CD8-positive, alpha-beta T cell (primary cell): ENCODE measurements at regions of chr1 and their contacts with region 1.

Region 1: GRCh38 chr1:89358287-89358893 is 5.5 kb upstream of the GBP6 start:
- DNase-seq: peak; percentile 70 to 88 (median 84)
- ATAC-seq: peak; percentile 96
- H3K4me3 ChIP-seq: no peak overlapping the region
- H3K4me3 Mint-ChIP-seq: peak overlapping the region; percentile 8
- H3K27ac ChIP-seq: no peak overlapping the region
- H3K27ac Mint-ChIP-seq: peak overlapping the region; percentile 1
- H3K4me1 ChIP-seq: peaks cover 7% of the 10 kb centered on the region
- H3K4me1 Mint-ChIP-seq: peaks cover 35% of the 10 kb centered on the region
- H3K27me3 ChIP-seq: no peaks in the 10 kb centered on the region
- H3K27me3 Mint-ChIP-seq: no peaks in the 10 kb centered on the region
- CTCF ChIP-seq: peak; percentile 95

Region 2: GRCh38 chr1:88983791-88984559 is 374.4 kb before region 1 on chr1:
- CTCF ChIA-PET with region 1: interaction called, 28 read pairs
- POLR2A ChIA-PET with region 1: no interaction called
- intact Hi-C with region 1: no loop called
- DNase-seq: peak in 4 of 9 experiments; percentile 23 to 83 (median 61)
- ATAC-seq: peak; percentile 85
- H3K4me3 ChIP-seq: no peak overlapping the region
- H3K4me3 Mint-ChIP-seq: peak overlapping the region; percentile 47
- H3K27ac ChIP-seq: peak overlapping the region in 1 of 2 experiments; percentile 38
- H3K27ac Mint-ChIP-seq: peak overlapping the region; percentile 52
- H3K4me1 ChIP-seq: peaks cover 15% of the 10 kb centered on the region
- H3K4me1 Mint-ChIP-seq: peaks cover 62% of the 10 kb centered on the region
- H3K27me3 ChIP-seq: no peaks in the 10 kb centered on the region
- H3K27me3 Mint-ChIP-seq: no peaks in the 10 kb centered on the region
- CTCF ChIP-seq: peak; percentile 69

Region 3: GRCh38 chr1:89005286-89006151 is 352.9 kb before region 1 on chr1:
- CTCF ChIA-PET with region 1: interaction called, 72 read pairs
- POLR2A ChIA-PET with region 1: interaction called, 4 read pairs
- intact Hi-C with region 1: no loop called
- DNase-seq: no peak
- ATAC-seq: no peak
- H3K4me3 ChIP-seq: no peak overlapping the region
- H3K4me3 Mint-ChIP-seq: no peak overlapping the region
- H3K27ac ChIP-seq: no peak overlapping the region
- H3K27ac Mint-ChIP-seq: no peak overlapping the region
- H3K4me1 ChIP-seq: peaks cover 24% of the 10 kb centered on the region
- H3K4me1 Mint-ChIP-seq: peaks cover 40% of the 10 kb centered on the region
- H3K27me3 ChIP-seq: no peaks in the 10 kb centered on the region
- H3K27me3 Mint-ChIP-seq: no peaks in the 10 kb centered on the region
- CTCF ChIP-seq: no peak

Region 4: DNA sequence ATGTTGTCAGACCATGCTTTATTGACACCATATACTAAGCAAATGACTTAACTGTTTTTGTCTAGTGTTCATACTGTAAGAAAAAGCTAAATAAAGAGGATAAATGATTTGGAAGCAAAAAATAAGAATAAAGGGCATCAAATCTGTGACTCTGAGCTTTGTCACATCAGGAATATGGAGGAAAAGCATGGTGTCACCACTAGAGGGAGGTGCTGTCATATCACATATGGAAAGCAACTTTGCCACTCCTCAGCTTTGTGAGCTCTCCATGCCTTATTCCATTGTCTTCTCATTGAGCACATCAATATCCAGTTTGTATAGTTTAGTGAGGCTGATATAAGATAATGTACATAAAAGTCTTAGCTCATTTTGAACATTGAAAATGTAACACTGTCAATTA is 272.6 kb before region 1 on chr1:
- CTCF ChIA-PET with region 1: interaction called, 24 read pairs
- POLR2A ChIA-PET with region 1: no interaction called
- intact Hi-C with region 1: loop called (anchors 1 kb)
- DNase-seq: peak in 4 of 9 experiments; percentile 33 to 73 (median 51)
- ATAC-seq: peak; percentile 57
- H3K4me3 ChIP-seq: no peak overlapping the region
- H3K4me3 Mint-ChIP-seq: no peak overlapping the region
- H3K27ac ChIP-seq: no peak overlapping the region
- H3K27ac Mint-ChIP-seq: no peak overlapping the region
- H3K4me1 ChIP-seq: no peaks in the 10 kb centered on the region
- H3K4me1 Mint-ChIP-seq: no peaks in the 10 kb centered on the region
- H3K27me3 ChIP-seq: no peaks in the 10 kb centered on the region
- H3K27me3 Mint-ChIP-seq: no peaks in the 10 kb centered on the region
- CTCF ChIP-seq: peak; percentile 59

Region 5: DNA sequence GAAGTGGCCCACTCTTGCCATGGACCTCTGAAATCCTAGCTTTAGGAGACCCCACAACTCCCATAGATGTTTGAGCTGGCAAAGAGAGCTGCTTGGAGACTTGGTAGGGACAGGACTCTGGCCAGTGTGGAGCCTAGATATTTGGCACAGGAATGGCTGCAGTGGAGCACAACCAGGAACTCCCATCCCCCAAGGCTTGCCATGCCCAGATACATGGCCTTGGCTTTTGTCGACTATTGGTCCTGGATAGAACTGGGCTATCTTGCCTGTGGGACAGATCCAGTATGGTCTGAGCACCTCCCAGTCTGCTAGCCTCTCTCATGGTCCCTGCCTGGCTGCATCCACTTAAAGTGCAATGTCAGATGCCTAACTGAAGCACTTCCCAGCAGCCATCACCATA is 224.6 kb before region 1 on chr1:
- CTCF ChIA-PET with region 1: interaction called, 10 read pairs
- POLR2A ChIA-PET with region 1: no interaction called
- intact Hi-C with region 1: no loop called
- DNase-seq: no peak
- ATAC-seq: no peak
- H3K4me3 ChIP-seq: no peak overlapping the region
- H3K4me3 Mint-ChIP-seq: no peak overlapping the region
- H3K27ac ChIP-seq: no peak overlapping the region
- H3K27ac Mint-ChIP-seq: no peak overlapping the region
- H3K4me1 ChIP-seq: peaks cover 9% of the 10 kb centered on the region
- H3K4me1 Mint-ChIP-seq: peaks cover 17% of the 10 kb centered on the region
- H3K27me3 ChIP-seq: no peaks in the 10 kb centered on the region
- H3K27me3 Mint-ChIP-seq: no peaks in the 10 kb centered on the region
- CTCF ChIP-seq: no peak

Region 6: DNA sequence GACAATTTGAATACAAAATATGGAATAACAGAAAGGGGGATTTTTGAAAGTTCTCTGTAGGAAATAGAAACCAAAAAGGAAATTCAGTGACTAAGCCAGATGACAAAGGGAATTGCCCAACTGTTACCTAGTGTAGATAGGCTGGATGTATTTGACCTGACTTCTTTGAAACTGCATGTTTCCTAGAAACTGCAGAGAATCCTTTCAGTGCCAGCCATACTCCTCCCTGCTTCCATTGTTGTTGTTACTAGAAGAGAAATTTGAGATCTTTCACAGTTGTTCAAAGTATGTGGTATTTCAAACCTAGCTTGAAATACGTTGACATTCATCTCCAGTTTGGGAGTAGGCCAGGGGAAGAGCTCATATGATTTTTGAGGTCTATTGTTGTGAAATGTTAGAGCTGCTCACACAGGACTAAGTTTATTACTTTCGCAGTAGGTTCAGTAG is 84.0 kb before region 1 on chr1:
- CTCF ChIA-PET with region 1: interaction called, 25 read pairs
- POLR2A ChIA-PET with region 1: interaction called, 6 read pairs
- intact Hi-C with region 1: loop called (anchors 1 to 5 kb)
- DNase-seq: peak in 2 of 9 experiments; percentile 68 to 81
- ATAC-seq: peak; percentile 39
- H3K4me3 ChIP-seq: peak overlapping the region in 1 of 2 experiments; percentile 0
- H3K4me3 Mint-ChIP-seq: peak overlapping the region; percentile 85
- H3K27ac ChIP-seq: peak overlapping the region; percentile 24 to 70
- H3K27ac Mint-ChIP-seq: peak overlapping the region; percentile 97
- H3K4me1 ChIP-seq: peaks cover 62% of the 10 kb centered on the region
- H3K4me1 Mint-ChIP-seq: peaks cover 85% of the 10 kb centered on the region
- H3K27me3 ChIP-seq: no peaks in the 10 kb centered on the region
- H3K27me3 Mint-ChIP-seq: no peaks in the 10 kb centered on the region
- CTCF ChIP-seq: no peak

Region 7: DNA sequence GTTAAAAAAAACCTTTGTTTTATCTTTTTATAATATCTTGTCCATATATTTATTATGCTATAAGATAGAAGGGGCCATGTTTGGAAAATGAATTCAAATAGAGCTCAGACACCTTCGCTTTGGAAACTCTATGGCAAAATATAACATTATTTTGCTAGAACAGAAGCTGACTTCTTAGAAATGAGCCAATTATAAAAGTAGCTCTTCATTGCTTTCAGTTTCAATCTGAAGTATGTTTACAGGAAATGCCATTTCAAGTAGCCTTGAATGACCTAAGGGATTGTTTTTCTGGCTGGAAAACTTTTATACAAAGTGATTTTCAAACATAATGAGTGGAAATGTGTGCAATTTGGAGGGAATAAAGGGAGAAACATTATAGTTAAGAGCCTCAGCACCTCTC is 47.9 kb before region 1 on chr1:
- CTCF ChIA-PET with region 1: interaction called, 19 read pairs
- POLR2A ChIA-PET with region 1: no interaction called
- intact Hi-C with region 1: no loop called
- DNase-seq: peak in 2 of 9 experiments; percentile 27 to 57
- ATAC-seq: peak; percentile 54
- H3K4me3 ChIP-seq: no peak overlapping the region
- H3K4me3 Mint-ChIP-seq: peak overlapping the region; percentile 47
- H3K27ac ChIP-seq: peak overlapping the region; percentile 22 to 64
- H3K27ac Mint-ChIP-seq: peak overlapping the region; percentile 90
- H3K4me1 ChIP-seq: peaks cover 39% of the 10 kb centered on the region
- H3K4me1 Mint-ChIP-seq: peaks cover 54% of the 10 kb centered on the region
- H3K27me3 ChIP-seq: no peaks in the 10 kb centered on the region
- H3K27me3 Mint-ChIP-seq: no peaks in the 10 kb centered on the region
- CTCF ChIP-seq: no peak

Region 8: DNA sequence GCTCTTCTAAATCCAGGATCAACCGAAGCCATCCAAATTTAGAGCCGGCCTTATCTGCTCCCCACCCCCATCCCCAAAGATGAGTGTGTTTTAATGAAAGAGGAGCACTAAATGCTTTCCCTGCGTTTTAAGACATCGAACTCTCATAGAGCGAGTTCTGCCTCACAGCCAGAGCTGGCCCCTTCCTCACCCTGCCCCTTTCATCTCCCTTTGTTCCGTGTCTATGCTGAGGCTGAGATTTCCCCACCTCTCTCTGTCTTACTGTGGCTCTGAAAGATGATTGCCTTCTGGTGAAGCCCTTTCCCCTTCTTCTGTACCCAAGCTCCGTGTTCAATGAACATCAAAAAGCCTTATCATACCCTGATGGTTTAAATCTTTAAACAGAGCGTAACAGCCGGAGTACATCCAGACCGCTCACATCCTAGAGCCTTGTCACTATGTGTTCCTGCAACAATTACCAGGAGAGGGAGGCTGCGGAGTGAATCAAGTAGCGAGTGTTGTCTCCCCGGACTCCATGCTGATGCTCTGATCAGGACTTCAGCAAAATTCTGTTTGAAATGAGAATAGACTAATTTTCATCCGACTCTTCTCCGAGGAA is 746.6 kb after region 1 on chr1:
- CTCF ChIA-PET with region 1: no interaction called
- POLR2A ChIA-PET with region 1: no interaction called
- intact Hi-C with region 1: no loop called
- DNase-seq: no peak
- ATAC-seq: no peak
- H3K4me3 ChIP-seq: no peak overlapping the region
- H3K4me3 Mint-ChIP-seq: no peak overlapping the region
- H3K27ac ChIP-seq: no peak overlapping the region
- H3K27ac Mint-ChIP-seq: no peak overlapping the region
- H3K4me1 ChIP-seq: no peaks in the 10 kb centered on the region
- H3K4me1 Mint-ChIP-seq: no peaks in the 10 kb centered on the region
- H3K27me3 ChIP-seq: no peaks in the 10 kb centered on the region
- H3K27me3 Mint-ChIP-seq: peaks cover 14% of the 10 kb centered on the region
- CTCF ChIP-seq: no peak